Activated CD4-positive, alpha-beta T cell treated with anti-CD3 and anti-CD28 coated beads, Interleukin-2, amount 10 ng/mL, durations not matched to agents 7 days and 5 days (primary cell): ENCODE measurements at regions of chr3 and their contacts with region 1.

Region 1: DNA sequence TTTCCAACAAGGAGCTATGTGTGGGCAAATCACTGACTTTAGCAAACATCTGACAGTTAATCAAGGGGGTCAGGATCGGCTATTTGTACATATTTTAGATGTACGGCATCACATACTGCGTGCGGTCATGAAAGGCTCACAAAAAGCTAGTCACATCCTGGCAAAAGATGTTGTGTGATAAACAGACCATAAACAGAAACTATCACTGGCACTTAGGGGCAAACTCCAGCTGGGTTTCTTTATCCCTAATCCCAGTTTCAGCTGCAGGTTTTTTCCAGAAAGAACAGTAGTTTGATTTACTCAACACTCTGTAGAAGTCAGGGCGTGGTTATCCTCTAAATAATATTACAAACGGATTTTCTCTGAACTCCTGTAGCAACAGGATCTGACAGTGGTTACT is 112.4 kb upstream of the BHLHE40 start:
- DNase-seq: peak; percentile 20
- H3K4me3 Mint-ChIP-seq: peak overlapping the region; percentile 76
- H3K27ac Mint-ChIP-seq: peak overlapping the region; percentile 91
- H3K4me1 Mint-ChIP-seq: peaks cover 50% of the 10 kb centered on the region
- H3K27me3 Mint-ChIP-seq: no peaks in the 10 kb centered on the region

Region 2: GRCh38 chr3:4885316-4885715 is 18.5 kb after region 1 on chr3:
- CTCF ChIA-PET with region 1: interaction called, 14 read pairs
- POLR2A ChIA-PET with region 1: no interaction called
- DNase-seq: no peak
- H3K4me3 Mint-ChIP-seq: no peak overlapping the region
- H3K27ac Mint-ChIP-seq: no peak overlapping the region
- H3K4me1 Mint-ChIP-seq: peaks cover 39% of the 10 kb centered on the region
- H3K27me3 Mint-ChIP-seq: peaks cover 2% of the 10 kb centered on the region